ENCODE measurements at regions of chr2 and their contacts with region 1.

Region 1: DNA sequence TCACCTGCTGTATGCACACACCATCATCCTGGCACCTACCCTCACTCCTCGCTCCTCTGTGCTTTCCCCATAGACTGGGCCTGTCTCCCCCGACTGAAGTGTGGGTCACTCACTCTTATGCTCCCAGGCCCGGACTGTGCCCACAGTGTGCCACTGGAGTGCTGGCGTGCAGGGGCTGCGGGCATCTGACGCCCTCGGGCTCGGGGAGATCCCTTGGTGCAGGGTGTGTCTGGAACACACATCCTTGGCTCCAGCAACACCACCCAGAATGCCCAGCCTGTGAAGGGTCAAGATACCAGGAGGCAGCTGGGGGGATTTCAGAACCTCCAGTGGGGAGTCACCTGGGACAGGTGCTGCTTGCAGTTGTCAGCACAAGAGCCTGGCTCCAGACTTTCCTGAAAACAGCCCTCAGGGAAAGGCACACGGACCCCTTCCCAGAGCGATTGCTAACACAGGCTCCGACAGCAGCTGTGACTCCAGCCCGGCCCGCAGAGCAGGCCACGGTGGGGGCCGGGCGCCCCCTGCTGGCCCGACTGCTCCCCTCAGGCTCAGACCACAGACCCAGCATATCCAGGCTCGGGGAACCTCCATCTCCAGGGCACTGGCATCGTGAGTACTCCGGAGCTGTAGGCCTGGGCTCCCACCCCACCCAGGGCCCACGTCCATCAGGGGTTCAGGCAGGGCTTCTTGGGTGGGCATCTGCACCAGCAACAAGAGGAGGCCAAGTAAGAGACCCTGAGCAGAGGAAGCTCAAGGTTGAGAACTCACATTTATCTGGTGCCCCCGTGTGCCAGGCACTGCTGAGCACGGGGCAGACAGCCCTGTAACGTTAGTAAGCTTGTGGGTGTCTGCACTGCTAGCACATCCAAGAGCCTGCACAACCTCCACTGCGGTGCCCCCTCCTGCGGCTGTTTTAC is 8.6 kb downstream of the HS1BP3 start:
- DNase-seq: peak; percentile 82
- ATAC-seq: peak; percentile 99
- H3K4me3 ChIP-seq: no peak overlapping the region
- H3K4me3 Mint-ChIP-seq: no peak overlapping the region
- H3K27ac ChIP-seq: no peak overlapping the region
- H3K27ac Mint-ChIP-seq: no peak overlapping the region
- H3K4me1 ChIP-seq: peaks cover 3 to 13% of the 10 kb centered on the region in 2 donors
- H3K4me1 Mint-ChIP-seq: peaks cover 12% of the 10 kb centered on the region
- H3K27me3 ChIP-seq: no peaks in the 10 kb centered on the region
- H3K27me3 Mint-ChIP-seq: no peaks in the 10 kb centered on the region
- CTCF ChIP-seq: peak; percentile 92

Region 2: DNA sequence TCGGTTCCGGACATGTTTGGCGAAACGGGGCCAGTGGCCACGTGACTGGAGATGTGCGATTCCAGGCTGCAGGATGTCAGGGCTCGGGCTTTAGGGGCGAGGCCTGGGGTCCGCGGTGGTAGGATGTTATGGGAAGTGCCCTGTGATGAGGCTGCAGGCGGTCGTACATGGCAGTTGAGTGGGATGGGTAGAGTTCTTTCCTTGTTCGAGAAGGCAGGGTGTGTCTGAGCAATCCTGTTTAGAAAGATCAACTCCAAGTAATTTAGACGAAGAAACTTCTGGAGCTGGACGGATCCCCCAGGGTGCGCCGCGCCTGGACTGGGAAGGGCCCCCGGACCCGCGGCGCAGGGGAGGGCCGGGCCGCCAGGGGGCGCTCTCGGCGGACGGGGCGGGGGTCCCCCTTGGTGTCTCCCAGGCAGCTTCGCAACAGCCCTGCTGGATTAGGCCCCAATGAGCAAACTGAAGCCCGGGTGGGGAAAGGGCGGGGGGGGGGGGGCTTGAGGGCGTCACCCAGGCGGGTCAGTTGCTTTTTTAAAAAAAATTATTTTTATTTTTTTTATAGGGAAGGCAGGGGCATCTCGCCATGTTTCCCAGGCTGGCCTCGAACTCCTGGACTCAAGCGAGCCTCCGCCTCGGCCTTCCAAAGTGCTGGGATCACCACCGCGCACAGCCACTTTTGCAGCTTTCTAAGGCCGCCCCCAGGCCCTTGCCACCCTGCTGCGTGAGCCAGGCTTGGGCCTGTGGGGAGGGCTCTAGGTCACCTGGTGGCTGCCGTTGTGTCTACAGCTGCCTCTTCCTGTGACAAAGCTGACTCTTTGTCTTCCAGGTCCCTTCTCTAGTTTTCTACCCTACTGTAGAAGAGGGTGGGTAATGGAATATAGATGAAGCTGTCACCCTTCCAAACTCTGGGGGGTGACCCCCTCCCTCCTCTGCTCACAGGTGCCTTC is 400.0 kb before region 1 on chr2:
- CTCF ChIA-PET with region 1: no interaction called
- POLR2A ChIA-PET with region 1: no interaction called
- intact Hi-C with region 1: loop called (anchors 5 kb)
- DNase-seq: peak; percentile 28
- ATAC-seq: peak; percentile 33
- H3K4me3 ChIP-seq: peak overlapping the region in 2 of 5 experiments; percentile 2 to 15
- H3K4me3 Mint-ChIP-seq: peak overlapping the region; percentile 67
- H3K27ac ChIP-seq: no peak overlapping the region
- H3K27ac Mint-ChIP-seq: no peak overlapping the region
- H3K4me1 ChIP-seq: no peaks in the 10 kb centered on the region
- H3K4me1 Mint-ChIP-seq: peaks cover 6% of the 10 kb centered on the region
- H3K27me3 ChIP-seq: peaks cover 0 to 5% (median 0%) of the 10 kb centered on the region in 4 experiments
- H3K27me3 Mint-ChIP-seq: peaks cover 12% of the 10 kb centered on the region
- CTCF ChIP-seq: peak; percentile 50

Region 3: GRCh38 chr2:20326163-20326780 is 316.0 kb before region 1 on chr2:
- CTCF ChIA-PET with region 1: interaction called, 16 read pairs
- POLR2A ChIA-PET with region 1: no interaction called
- intact Hi-C with region 1: no loop called
- DNase-seq: peak; percentile 60
- ATAC-seq: peak; percentile 56
- H3K4me3 ChIP-seq: no peak overlapping the region
- H3K4me3 Mint-ChIP-seq: no peak overlapping the region
- H3K27ac ChIP-seq: peak overlapping the region in 1 of 2 donors; percentile 85
- H3K27ac Mint-ChIP-seq: no peak overlapping the region
- H3K4me1 ChIP-seq: peaks cover 17 to 28% of the 10 kb centered on the region in 2 donors
- H3K4me1 Mint-ChIP-seq: peaks cover 62% of the 10 kb centered on the region
- H3K27me3 ChIP-seq: no peaks in the 10 kb centered on the region
- H3K27me3 Mint-ChIP-seq: no peaks in the 10 kb centered on the region
- CTCF ChIP-seq: peak; percentile 76

Region 4: DNA sequence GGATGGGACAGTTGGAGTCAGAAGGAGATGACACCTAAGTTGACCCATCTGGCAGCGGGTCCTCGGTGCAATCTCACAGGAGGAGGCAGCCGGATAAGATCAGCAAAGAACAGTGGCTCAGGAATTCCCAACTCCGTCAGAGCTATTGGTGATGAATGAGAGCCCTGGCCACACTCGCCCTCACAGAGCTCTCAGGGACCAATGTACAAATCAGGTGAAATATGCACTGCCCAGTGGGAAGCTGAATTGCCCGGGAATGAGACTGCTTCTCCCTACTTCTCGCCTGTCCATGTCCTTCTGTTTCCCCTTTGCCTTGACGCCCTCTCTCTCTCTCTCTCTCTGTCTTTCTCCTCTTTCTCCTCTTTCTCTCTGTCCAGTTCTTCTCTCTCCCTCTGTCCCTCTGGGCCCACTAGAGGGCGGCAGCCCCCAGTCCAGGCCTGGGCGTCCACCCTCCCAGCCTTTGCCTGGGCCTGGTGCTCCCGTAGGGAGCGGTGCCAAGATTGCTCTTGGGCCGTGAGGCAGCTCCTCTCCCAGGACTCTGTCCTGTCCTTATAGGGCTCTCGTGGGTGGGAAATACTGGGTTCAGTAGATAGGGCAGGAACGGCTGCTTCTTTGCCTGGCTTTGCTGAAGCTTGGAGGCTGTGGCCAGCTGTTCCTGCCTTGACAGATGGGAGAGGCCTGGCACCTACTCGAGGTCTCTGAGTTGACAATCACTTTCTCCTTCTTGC is 263.4 kb before region 1 on chr2:
- CTCF ChIA-PET with region 1: interaction called, 20 read pairs
- POLR2A ChIA-PET with region 1: no interaction called
- intact Hi-C with region 1: no loop called
- DNase-seq: peak; percentile 8
- ATAC-seq: no peak
- H3K4me3 ChIP-seq: no peak overlapping the region
- H3K4me3 Mint-ChIP-seq: no peak overlapping the region
- H3K27ac ChIP-seq: no peak overlapping the region
- H3K27ac Mint-ChIP-seq: no peak overlapping the region
- H3K4me1 ChIP-seq: no peaks in the 10 kb centered on the region
- H3K4me1 Mint-ChIP-seq: no peaks in the 10 kb centered on the region
- H3K27me3 ChIP-seq: no peaks in the 10 kb centered on the region
- H3K27me3 Mint-ChIP-seq: peaks cover 16% of the 10 kb centered on the region
- CTCF ChIP-seq: peak; percentile 30

Region 5: GRCh38 chr2:20411361-20411894 is 230.9 kb before region 1 on chr2:
- CTCF ChIA-PET with region 1: interaction called, 128 read pairs
- POLR2A ChIA-PET with region 1: interaction called, 9 read pairs
- intact Hi-C with region 1: loop called (anchors 1 kb)
- DNase-seq: peak; percentile 82
- ATAC-seq: peak; percentile 99
- H3K4me3 ChIP-seq: no peak overlapping the region
- H3K4me3 Mint-ChIP-seq: no peak overlapping the region
- H3K27ac ChIP-seq: no peak overlapping the region
- H3K27ac Mint-ChIP-seq: no peak overlapping the region
- H3K4me1 ChIP-seq: no peaks in the 10 kb centered on the region
- H3K4me1 Mint-ChIP-seq: peaks cover 2% of the 10 kb centered on the region
- H3K27me3 ChIP-seq: peaks cover 0 to 12% (median 3%) of the 10 kb centered on the region in 4 experiments
- H3K27me3 Mint-ChIP-seq: peaks cover 9% of the 10 kb centered on the region
- CTCF ChIP-seq: peak; percentile 80

Region 6: DNA sequence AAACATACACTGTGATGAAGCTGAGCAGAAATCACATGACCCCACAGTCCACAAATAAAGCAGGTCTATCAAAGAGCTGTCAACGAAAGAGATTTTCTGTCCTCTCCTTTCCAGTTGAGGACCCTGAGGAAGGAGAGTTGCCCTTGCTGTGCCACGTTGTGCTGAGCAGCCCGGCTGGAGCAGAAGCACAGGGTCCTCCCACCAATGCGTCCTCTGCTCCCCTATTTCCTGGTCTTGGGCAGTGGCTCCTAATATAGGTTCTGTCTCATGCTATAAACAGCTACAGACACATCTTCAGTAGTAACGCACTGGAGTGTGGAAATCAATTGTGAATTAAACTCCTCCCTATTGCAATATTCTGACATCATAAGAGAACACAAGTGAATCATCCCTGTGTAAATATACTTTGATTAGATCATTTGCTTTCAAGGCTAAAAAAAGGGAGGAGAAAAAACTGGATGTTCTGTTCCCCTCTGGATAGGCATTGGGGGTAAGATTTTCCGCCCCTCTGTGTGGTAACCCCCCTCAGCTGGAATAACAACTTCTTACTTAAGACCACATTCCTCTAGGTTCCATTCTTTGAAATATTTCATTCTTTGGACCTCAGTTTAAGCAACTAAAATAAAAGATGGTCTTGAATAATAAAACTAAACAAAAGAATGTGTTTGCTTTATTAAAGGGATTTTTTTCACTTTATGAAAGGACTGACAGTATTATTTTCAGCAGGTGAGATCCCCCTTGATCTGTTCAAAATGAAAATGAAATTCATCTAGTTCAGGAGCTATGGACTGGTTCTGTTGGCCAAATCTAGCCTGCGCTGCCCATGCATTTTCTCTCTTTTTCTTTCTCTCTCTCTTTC is 203.8 kb before region 1 on chr2:
- CTCF ChIA-PET with region 1: interaction called, 114 read pairs
- POLR2A ChIA-PET with region 1: no interaction called
- intact Hi-C with region 1: loop called (anchors 1 kb)
- DNase-seq: no peak
- ATAC-seq: no peak
- H3K4me3 ChIP-seq: no peak overlapping the region
- H3K4me3 Mint-ChIP-seq: no peak overlapping the region
- H3K27ac ChIP-seq: no peak overlapping the region
- H3K27ac Mint-ChIP-seq: no peak overlapping the region
- H3K4me1 ChIP-seq: no peaks in the 10 kb centered on the region
- H3K4me1 Mint-ChIP-seq: no peaks in the 10 kb centered on the region
- H3K27me3 ChIP-seq: peaks cover 0 to 8% (median 0%) of the 10 kb centered on the region in 4 experiments
- H3K27me3 Mint-ChIP-seq: peaks cover 22% of the 10 kb centered on the region
- CTCF ChIP-seq: no peak

Measured in B cell (primary cell).